Right ventricle myocardium superior (tissue), 1 donor: ENCODE measurements at regions of chr18 and their contacts with region 1.

Region 1: GRCh38 chr18:79380816-79381806 is 14.6 kb upstream of the NFATC1 start:
- DNase-seq: peak; percentile 78
- ATAC-seq: peak; percentile 64

Region 2: DNA sequence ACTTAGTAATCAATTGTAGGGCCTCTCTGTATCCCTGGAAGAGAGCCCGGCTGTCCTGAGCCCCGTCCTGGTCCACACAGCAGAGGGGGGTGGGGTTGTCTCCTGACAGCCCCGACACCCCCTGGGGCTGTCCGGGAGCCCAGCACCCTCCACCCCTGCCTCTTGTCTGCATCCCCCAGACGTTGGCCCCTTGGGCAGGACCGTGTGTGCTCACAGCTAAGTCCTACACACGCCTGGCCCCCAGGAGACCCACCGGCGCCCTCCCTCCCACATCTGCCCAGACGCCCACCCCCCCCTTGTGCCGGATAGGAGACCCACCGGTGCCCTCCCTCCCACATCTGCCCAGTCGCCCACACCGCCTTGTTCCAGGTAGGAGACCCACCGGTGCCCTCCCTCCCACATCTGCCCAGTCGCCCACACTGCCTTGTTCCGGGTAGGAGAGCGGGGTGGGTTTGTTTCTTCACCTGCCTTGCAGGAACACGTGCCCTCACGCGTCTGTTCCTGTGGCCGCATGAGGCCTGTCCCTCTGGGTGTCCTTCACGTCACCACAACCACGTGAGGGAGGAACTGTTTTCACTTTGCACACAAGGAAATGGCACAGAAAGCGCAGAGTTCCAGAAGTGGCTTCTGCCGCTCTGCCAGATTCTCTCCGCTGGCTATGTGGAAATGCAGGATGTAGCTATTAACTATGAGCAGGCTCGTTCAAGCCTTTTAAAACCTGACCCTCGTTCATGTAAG is 46.4 kb before region 1 on chr18:
- intact Hi-C with region 1: no loop called
- DNase-seq: no peak
- ATAC-seq: no peak

Region 3: DNA sequence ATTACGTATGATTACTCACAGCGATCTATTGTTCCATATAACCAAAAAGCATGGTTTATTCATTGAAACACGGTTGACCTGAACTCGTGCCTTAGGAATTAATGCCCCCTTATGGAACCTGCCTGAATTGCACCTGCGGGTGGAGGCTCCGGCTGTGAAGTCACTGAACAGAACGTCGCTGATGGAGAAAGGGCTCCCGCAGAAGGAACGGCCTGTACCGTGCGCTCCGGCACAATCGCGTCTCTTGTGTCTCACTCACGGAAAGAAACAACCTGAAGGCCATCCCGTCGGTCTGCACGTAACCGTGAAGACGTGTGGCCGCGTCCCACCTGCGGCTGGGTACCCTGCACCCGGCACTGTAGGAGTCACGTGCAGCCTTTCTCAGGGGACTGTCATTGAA is 147.7 kb after region 1 on chr18:
- intact Hi-C with region 1: loop called (anchors 2 kb)
- DNase-seq: no peak
- ATAC-seq: peak; percentile 46

Region 4: GRCh38 chr18:79644006-79644665 is 263.0 kb after region 1 on chr18:
- intact Hi-C with region 1: loop called (anchors 2 kb)
- DNase-seq: peak; percentile 72
- ATAC-seq: peak; percentile 94